ENCODE measurements at regions of chr6 and their contacts with region 1.

Region 1: GRCh38 chr6:35202066-35202546 is 11.7 kb upstream of the SCUBE3 start:
- DNase-seq: no peak
- H3K4me3 Mint-ChIP-seq: no peak overlapping the region
- H3K27ac Mint-ChIP-seq: no peak overlapping the region
- H3K4me1 Mint-ChIP-seq: peaks cover 25% of the 10 kb centered on the region
- H3K27me3 Mint-ChIP-seq: peaks cover 29% of the 10 kb centered on the region
- CTCF ChIP-seq: no peak

Region 2: GRCh38 chr6:34806738-34807453 is 395.2 kb before region 1 on chr6:
- CTCF ChIA-PET with region 1: no interaction called
- intact Hi-C with region 1: no loop called
- DNase-seq: no peak
- H3K4me3 Mint-ChIP-seq: no peak overlapping the region
- H3K27ac Mint-ChIP-seq: no peak overlapping the region
- H3K4me1 Mint-ChIP-seq: peaks cover 41% of the 10 kb centered on the region
- H3K27me3 Mint-ChIP-seq: no peaks in the 10 kb centered on the region
- CTCF ChIP-seq: no peak

Region 3: DNA sequence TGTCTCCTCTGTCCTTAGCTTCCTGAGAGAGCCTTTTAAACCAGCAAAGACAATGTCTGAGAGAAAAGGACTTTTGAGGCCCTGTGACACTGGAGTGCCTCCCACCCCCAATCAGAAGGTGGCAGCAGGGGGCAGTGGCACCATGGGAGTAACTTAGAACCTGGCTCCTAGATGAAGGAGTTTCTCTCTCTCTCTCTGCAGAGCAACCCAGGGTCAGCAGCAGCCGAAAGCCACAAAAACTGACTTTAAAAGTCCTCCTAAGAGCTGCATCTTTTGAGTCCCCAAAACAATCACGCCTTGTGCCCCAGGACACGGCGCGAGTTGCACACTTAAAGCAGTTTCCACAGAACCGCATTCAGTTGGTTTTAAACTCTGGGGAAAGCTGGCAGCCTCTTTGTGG is 55.7 kb before region 1 on chr6:
- CTCF ChIA-PET with region 1: interaction called, 74 read pairs
- intact Hi-C with region 1: loop called (anchors 1 kb)
- DNase-seq: peak; percentile 81
- H3K4me3 Mint-ChIP-seq: no peak overlapping the region
- H3K27ac Mint-ChIP-seq: no peak overlapping the region
- H3K4me1 Mint-ChIP-seq: peaks cover 51% of the 10 kb centered on the region
- H3K27me3 Mint-ChIP-seq: no peaks in the 10 kb centered on the region
- CTCF ChIP-seq: peak; percentile 86

Region 4: DNA sequence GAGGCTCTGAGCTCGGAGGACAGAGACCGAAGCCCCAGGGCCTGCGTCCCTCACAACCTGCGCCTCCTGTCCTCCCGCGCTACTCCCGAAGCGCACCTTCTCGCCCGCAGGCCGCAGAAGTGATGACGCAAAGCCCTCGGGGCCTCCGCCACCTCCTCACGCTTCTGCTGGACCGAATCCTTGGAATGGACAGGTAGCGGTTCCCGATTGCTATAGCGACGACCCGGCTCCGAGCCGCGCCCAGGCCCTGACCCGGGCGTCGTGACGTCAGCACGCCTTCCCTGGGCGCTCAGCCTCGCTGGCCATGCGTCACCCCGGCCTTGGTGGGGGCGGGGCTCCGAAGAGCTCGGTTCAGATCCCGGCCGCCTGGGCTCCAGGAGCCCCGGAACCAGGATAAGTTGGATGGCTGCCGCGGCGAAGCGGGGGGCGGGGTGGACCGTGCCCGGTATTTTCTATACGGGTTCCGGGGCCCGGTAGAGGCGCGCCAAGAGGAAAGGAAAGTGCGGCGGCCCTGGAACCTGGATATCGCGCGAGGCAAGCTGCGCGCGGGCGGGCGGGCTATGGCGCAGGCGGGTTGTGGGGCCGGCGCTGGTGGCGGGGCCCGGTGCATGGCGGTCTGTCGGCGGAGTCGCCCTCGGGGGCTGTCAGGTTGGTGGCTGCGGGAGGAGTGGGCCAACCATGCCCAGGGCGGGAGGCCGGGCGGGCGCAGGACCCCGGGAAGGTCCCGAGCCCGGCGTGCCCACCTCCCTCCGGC is 57.3 kb after region 1 on chr6 and contains the start of gene ZNF76:
- CTCF ChIA-PET with region 1: no interaction called
- intact Hi-C with region 1: no loop called
- DNase-seq: peak; percentile 100
- H3K4me3 Mint-ChIP-seq: peak within 1 kb of the TSS; percentile 98
- H3K27ac Mint-ChIP-seq: peak within 1 kb of the TSS; percentile 99
- H3K4me1 Mint-ChIP-seq: peaks cover 39% of the 10 kb centered on the region
- H3K27me3 Mint-ChIP-seq: no peaks in the 10 kb centered on the region
- CTCF ChIP-seq: no peak
- total RNA-seq, gene ZNF76: 52.0 and 60.0 TPM in 2 replicates

Region 5: DNA sequence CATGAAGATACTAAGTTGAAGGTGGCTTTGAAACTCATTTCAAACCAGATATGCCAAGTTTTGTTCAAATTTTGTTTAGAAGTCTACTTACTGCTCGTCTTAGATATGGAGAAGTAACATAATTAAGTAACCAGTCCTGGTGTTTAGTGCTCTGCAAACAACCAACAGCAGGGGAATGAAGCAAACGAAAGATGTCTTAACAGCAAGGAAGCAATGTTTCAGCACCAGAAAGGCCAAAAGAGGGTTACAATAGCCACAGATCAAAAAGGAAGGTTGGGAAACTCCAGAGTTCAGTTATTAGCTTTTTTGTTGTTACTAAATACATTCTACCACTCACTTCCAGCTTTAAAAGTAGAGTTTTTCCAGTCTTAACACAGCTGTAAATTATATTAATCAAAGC is 648.1 kb after region 1 on chr6:
- CTCF ChIA-PET with region 1: no interaction called
- intact Hi-C with region 1: no loop called
- DNase-seq: no peak
- H3K4me3 Mint-ChIP-seq: no peak overlapping the region
- H3K27ac Mint-ChIP-seq: peak overlapping the region; percentile 27
- H3K4me1 Mint-ChIP-seq: no peaks in the 10 kb centered on the region
- H3K27me3 Mint-ChIP-seq: no peaks in the 10 kb centered on the region
- CTCF ChIP-seq: no peak

Measured in Calu3 (cell line).